ENCODE measurements at regions of chr19 and their contacts with region 1.

Region 1: DNA sequence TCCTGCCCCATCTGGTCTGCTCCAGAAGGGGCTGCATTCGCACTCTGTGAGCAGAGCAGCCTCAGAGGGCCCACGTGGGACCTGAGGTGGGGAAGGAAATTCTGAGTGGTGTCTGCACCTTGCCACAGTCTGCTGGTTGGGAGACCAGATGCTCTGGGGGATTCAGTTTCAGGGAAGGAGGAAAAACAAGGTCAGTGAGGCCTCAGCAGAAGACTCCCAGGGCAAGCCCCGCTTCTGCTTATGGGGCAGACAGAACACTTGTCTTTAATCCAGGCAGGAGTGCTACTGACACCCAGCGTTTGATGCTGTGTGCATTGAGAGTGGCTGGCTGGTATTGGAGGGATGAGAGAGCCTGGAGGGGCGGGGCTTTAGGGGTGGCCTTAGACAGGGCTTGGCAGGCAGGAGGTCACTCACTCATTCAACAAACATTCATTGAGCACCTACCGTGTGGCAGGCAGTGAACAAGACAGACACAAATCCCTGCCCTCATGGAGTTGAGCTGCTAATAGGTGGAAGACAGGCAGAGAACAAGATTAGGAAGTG is 4.9 kb upstream of the CLEC17A start:
- DNase-seq: no peak
- ATAC-seq: no peak
- H3K4me3 ChIP-seq: no peak overlapping the region
- H3K27ac ChIP-seq: no peak overlapping the region
- H3K4me1 ChIP-seq: no peaks in the 10 kb centered on the region
- H3K27me3 ChIP-seq: no peaks in the 10 kb centered on the region

Region 2: DNA sequence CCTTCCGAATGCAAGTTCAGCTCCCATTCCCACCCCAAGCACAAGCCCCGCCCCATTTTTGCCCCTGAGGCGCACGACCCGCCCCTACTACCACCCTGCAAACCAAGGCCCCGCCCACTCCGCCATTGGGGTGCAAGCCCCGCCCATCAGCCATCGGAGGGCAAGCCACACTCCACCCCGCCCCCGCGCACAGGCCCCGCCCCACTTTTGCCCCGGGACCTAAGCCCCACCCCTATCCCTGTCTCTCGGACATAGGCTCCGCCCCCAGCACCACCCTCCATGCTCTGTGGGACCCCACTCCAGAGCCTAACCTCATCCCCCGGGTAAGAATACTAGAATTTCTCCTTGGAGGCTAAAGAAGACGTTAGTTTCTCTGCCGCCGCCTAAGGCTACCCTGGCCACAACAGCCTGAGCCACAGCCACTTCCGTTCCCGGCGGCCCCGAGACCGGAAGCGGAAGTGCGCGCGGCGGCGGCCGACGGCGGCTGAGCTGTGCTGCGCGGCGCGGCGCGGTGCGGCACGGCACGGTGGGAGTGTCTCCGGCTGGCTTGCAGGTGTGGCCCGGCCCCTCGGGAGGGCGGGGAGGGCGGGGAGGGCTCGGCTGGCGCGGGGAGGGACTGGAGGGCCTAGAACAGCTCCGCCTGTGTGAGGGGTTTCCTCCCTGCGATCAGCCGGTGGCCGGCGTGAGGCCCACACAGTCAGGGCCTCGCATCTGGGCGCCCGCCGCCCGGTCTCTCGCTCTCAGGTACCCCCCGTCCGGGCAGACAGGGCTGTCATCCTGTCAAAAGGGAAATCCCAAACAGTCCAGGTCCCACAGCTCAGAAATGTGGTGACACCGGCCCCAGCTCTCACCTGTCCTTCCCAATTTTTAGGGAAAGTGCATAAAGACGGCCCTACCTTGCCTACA is 111.9 kb after region 1 on chr19 and contains the start of gene ZNF333:
- intact Hi-C with region 1: loop called in 3 of 4 experiments (anchors 5 to 10 kb)
- DNase-seq: peak; percentile 98 to 99 (median 99)
- ATAC-seq: peak; percentile 99
- H3K4me3 ChIP-seq: peak within 1 kb of the TSS; percentile 89
- H3K27ac ChIP-seq: peak within 1 kb of the TSS; percentile 99
- H3K4me1 ChIP-seq: no peaks in the 10 kb centered on the region
- H3K27me3 ChIP-seq: no peaks in the 10 kb centered on the region
- total RNA-seq, gene ZNF333: 8.3 to 10.6 (median 10.1) TPM